Mammary epithelial cell (primary cell): ENCODE measurements at regions of chr13 and their contacts with region 1.

Region 1: GRCh38 chr13:113208424-113209335 is at the start of gene PCID2:
- DNase-seq: peak; percentile 88
- H3K4me3 ChIP-seq: peak within 1 kb of the TSS; percentile 74 to 93 (median 87)
- H3K27ac ChIP-seq: peak within 1 kb of the TSS; percentile 94
- H3K4me1 ChIP-seq: peaks cover 16% of the 10 kb centered on the region
- H3K27me3 ChIP-seq: no peaks in the 10 kb centered on the region
- CTCF ChIP-seq: peak in 1 of 2 donors; percentile 9
- total RNA-seq, gene PCID2: 34.7 to 42.0 TPM

Region 2: GRCh38 chr13:113029487-113030258 is 179.0 kb before region 1 on chr13:
- CTCF ChIA-PET with region 1: no interaction called
- dilution Hi-C with region 1: no loop called
- in situ Hi-C with region 1: no loop called
- intact Hi-C with region 1: loop called (anchors 2 kb)
- DNase-seq: no peak
- H3K4me3 ChIP-seq: no peak overlapping the region
- H3K27ac ChIP-seq: no peak overlapping the region
- H3K4me1 ChIP-seq: no peaks in the 10 kb centered on the region
- H3K27me3 ChIP-seq: no peaks in the 10 kb centered on the region
- CTCF ChIP-seq: peak; percentile 45 to 74

Region 3: GRCh38 chr13:113153810-113154748 is 54.6 kb before region 1 on chr13:
- CTCF ChIA-PET with region 1: no interaction called
- dilution Hi-C with region 1: no loop called
- in situ Hi-C with region 1: no loop called
- intact Hi-C with region 1: loop called (anchors 2 kb)
- DNase-seq: peak; percentile 29
- H3K4me3 ChIP-seq: peak overlapping the region; percentile 41 to 55 (median 48)
- H3K27ac ChIP-seq: no peak overlapping the region
- H3K4me1 ChIP-seq: peaks cover 9% of the 10 kb centered on the region
- H3K27me3 ChIP-seq: peaks cover 2% of the 10 kb centered on the region
- CTCF ChIP-seq: no peak

Region 4: GRCh38 chr13:113187263-113187669 is 21.4 kb before region 1 on chr13:
- CTCF ChIA-PET with region 1: no interaction called
- dilution Hi-C with region 1: no loop called
- in situ Hi-C with region 1: no loop called
- intact Hi-C with region 1: loop called (anchors 1 kb)
- DNase-seq: peak; percentile 97
- H3K4me3 ChIP-seq: no peak overlapping the region
- H3K27ac ChIP-seq: peak overlapping the region; percentile 84
- H3K4me1 ChIP-seq: peaks cover 15% of the 10 kb centered on the region
- H3K27me3 ChIP-seq: no peaks in the 10 kb centered on the region
- CTCF ChIP-seq: peak in 1 of 2 donors; percentile 15